ENCODE measurements at regions of chr4 and their contacts with region 1.

Region 1: DNA sequence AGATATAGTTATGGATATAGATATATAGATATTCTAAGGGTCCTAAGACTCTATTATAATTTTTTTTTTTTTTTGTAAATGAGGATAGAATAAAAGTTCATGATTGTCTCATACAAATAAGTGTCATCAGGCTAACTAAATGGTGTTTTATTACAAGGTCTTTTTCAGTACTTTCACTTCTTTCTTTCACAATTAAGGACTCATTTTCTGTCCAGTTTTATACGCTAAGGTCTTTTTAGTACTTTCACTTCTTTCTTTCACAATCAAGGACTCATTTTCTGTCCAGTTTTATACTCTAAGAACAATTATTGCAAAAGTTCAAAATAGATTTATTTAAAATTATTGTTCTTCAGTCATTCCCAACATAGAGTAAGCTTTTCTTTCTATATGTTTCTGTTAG is 32.7 kb downstream of the RUFY3 start:
- DNase-seq: no peak
- ATAC-seq: peak; percentile 82
- H3K4me3 ChIP-seq: peak overlapping the region; percentile 59; the same call in 1 of the 2 replicates
- H3K27ac ChIP-seq: peak overlapping the region; percentile 79
- H3K4me1 ChIP-seq: peaks cover 36% of the 10 kb centered on the region
- H3K27me3 ChIP-seq: no peaks in the 10 kb centered on the region
- CTCF ChIP-seq: no peak
- EP300 ChIP-seq: peak; percentile 49 to 85; a peak in 3 of 4 replicates
- POLR2A ChIP-seq: no peak
- RAD21 ChIP-seq: no peak

Region 2: DNA sequence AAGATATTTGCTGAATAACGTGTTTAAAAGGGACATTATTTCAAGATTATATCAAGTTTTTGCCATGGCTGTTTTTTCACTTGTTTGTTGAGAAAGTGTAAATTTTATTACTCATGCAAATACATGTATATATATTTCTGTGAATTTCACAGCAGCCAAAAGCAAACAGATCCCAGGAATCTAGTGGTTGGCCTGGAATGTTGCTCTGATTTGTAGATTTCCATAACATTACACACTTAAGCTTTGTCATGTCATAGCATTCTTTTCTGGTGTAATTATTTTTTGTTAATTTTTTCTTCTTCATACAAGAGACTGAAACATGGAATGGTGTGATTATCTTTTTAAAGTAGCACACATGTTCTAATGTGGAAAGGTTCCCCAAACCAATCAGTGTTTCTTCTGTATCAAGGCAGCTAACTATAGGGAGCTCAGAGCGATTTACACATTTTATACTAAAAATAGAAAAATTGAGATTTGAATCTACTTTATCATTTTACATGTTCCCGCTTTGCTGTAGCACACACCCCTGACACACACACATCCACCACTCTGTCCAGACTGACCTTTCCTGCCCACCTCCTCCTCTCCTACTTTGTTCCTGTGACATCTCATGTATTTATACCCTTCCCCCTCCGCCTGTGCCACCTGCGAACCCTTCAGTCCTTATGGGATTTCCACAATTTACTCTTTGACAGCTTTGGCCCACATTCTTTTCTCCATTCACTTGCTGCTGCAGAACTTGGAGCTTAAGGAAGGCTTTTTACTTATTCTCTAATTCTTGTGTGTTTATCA is 12.4 kb before region 1 on chr4:
- CTCF ChIA-PET with region 1: interaction called, 55 read pairs
- POLR2A ChIA-PET with region 1: interaction called, 6 read pairs
- RAD21 ChIA-PET with region 1: interaction called, 19 read pairs
- SMC1A ChIA-PET with region 1: interaction called, 204 read pairs
- in situ Hi-C with region 1: no loop called
- intact Hi-C with region 1: loop called (anchors 2 kb)
- DNase-seq: no peak
- ATAC-seq: no peak
- H3K4me3 ChIP-seq: no peak overlapping the region
- H3K27ac ChIP-seq: no peak overlapping the region
- H3K4me1 ChIP-seq: peaks cover 4% of the 10 kb centered on the region
- H3K27me3 ChIP-seq: no peaks in the 10 kb centered on the region; a peak in 1 of 4 replicates
- CTCF ChIP-seq: no peak
- EP300 ChIP-seq: no peak
- POLR2A ChIP-seq: no peak
- RAD21 ChIP-seq: no peak

Region 3: DNA sequence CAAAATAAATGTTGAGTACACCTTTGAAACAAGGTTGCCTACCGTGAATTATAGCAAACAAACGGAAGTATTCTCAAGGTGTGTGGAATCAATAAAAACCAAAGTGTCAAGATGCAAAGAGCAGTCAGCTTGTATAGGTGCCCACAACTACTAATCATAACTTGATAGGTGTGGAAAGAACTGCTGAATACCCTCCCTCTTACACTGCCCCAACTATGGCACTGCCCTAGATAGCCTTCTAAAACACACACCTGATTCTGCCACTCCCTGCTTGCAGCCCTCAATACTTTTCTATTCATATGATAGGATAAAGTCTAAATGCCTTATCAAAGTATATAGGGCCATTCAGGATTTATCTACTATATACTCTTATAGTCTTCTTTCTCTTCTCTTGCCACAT is 553.3 kb after region 1 on chr4:
- CTCF ChIA-PET with region 1: no interaction called
- POLR2A ChIA-PET with region 1: no interaction called
- RAD21 ChIA-PET with region 1: no interaction called
- SMC1A ChIA-PET with region 1: no interaction called
- in situ Hi-C with region 1: no loop called
- intact Hi-C with region 1: no loop called
- DNase-seq: no peak
- ATAC-seq: no peak
- H3K4me3 ChIP-seq: no peak overlapping the region
- H3K27ac ChIP-seq: no peak overlapping the region
- H3K4me1 ChIP-seq: peaks cover 3% of the 10 kb centered on the region; the same call in 1 of the 2 replicates
- H3K27me3 ChIP-seq: no peaks in the 10 kb centered on the region; a peak in 1 of 4 replicates
- CTCF ChIP-seq: no peak
- EP300 ChIP-seq: no peak
- POLR2A ChIP-seq: no peak
- RAD21 ChIP-seq: no peak